Brain microvascular endothelial cell (primary cell): ENCODE measurements at regions of chr6 and their contacts with region 1.

Region 1: GRCh38 chr6:57316581-57317059 is 810 bp upstream of the PRIM2 start:
- DNase-seq: peak; percentile 93
- H3K4me3 ChIP-seq: peak overlapping the region; percentile 76
- H3K27ac ChIP-seq: peak overlapping the region; percentile 35
- H3K27me3 ChIP-seq: no peaks in the 10 kb centered on the region
- CTCF ChIP-seq: peak; percentile 80

Region 2: DNA sequence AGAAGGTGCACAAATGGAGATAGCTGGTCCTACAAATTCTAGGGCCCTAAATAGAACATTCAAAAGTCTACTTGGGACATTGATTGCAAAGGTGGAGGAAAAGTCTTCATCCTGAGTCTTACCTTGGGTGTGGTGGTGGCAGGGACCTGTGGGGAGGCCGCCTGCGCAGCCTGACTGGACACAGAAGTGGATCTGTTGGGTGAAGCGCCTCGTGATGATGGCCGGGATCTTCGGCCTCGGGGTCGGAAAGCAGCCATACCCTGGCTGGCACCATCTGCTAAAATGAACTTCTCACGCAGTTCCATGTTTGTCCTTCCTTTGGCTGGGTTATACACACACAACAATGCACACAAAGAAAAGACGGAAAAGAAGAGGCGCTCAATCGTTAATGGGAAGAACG is 853.2 kb before region 1 on chr6:
- in situ Hi-C with region 1: no loop called
- DNase-seq: no peak
- H3K4me3 ChIP-seq: no peak overlapping the region
- H3K27ac ChIP-seq: no peak overlapping the region
- H3K27me3 ChIP-seq: no peaks in the 10 kb centered on the region
- CTCF ChIP-seq: no peak

Region 3: DNA sequence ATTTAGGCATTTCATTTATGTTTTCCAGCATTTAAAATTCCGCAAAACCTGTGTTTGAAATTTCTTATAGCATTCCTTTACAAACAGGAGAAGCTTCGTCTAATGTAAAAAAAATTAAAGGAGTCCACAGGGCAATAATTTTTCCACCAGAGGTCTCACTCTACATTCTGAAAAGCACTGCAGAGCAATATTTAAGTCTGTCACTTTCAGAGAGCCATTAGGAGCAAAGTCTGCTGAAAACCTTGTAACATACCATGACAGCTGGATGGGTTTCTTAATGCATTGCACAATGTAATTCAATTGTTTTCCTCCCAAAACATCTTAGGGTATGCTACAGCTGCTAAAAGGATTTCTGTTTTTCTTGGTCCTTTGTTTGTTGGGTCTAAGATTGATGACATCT is 126.5 kb before region 1 on chr6:
- in situ Hi-C with region 1: loop called (anchors 25 kb)
- DNase-seq: no peak
- H3K4me3 ChIP-seq: no peak overlapping the region
- H3K27ac ChIP-seq: peak overlapping the region; percentile 1
- H3K27me3 ChIP-seq: no peaks in the 10 kb centered on the region
- CTCF ChIP-seq: peak; percentile 48

Region 4: GRCh38 chr6:57257911-57258541 is 58.6 kb before region 1 on chr6:
- in situ Hi-C with region 1: no loop called
- DNase-seq: peak; percentile 72
- H3K4me3 ChIP-seq: no peak overlapping the region
- H3K27ac ChIP-seq: peak overlapping the region; percentile 95
- H3K27me3 ChIP-seq: no peaks in the 10 kb centered on the region
- CTCF ChIP-seq: no peak